ENCODE measurements at regions of chr11 and their contacts with region 1.

Region 1: DNA sequence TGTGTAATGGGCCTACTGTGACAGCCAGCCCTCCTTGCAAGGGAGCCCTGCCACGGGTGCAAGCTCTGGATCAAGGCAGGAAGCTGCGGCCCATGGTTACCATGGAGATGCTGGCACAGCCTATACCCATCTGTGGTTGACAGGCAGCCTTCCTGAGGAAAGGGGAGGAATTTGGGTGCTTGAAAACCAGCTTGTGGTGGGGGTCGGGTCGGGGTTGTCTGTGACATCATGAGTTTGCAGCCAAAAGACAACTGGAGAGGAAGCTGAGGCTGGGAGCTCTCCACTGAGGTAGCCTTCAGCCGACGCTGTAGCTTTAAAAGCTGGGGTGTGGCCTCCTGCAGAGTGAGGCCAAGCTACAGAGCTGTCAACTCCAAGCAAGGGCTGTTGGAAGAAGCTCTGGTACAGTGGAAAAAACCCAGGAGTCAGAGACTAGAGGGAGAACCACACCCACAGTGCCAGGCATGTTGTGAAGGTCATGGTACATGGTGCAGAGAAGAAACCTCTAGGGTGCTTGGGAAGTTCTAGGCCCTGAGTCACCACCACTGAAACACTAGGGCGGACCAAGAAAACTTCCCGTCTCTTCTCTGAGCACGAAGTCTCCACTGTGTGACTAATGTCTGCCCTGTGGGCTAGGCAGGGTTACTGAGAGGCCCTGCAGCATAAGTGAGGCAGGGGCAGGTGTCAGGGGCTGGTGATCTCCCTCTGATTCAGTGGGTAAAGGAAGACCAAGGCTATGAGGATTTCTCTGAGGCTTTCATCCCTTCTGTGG is 10.8 kb upstream of the LDHA start:
- DNase-seq: peak; percentile 90
- H3K4me3 Mint-ChIP-seq: peak overlapping the region; percentile 85
- H3K27ac Mint-ChIP-seq: peak overlapping the region; percentile 100
- H3K4me1 Mint-ChIP-seq: peaks cover 37% of the 10 kb centered on the region
- H3K27me3 Mint-ChIP-seq: no peaks in the 10 kb centered on the region

Region 2: GRCh38 chr11:18253231-18253630 is 130.3 kb before region 1 on chr11:
- intact Hi-C with region 1: no loop called
- DNase-seq: no peak
- H3K4me3 Mint-ChIP-seq: no peak overlapping the region
- H3K27ac Mint-ChIP-seq: no peak overlapping the region
- H3K4me1 Mint-ChIP-seq: peaks cover 8% of the 10 kb centered on the region
- H3K27me3 Mint-ChIP-seq: peaks cover 8% of the 10 kb centered on the region

Region 3: GRCh38 chr11:18395735-18396504 is 12.3 kb after region 1 on chr11:
- intact Hi-C with region 1: loop called (anchors 1 kb)
- DNase-seq: peak; percentile 99
- H3K4me3 Mint-ChIP-seq: peak overlapping the region; percentile 97
- H3K27ac Mint-ChIP-seq: peak overlapping the region; percentile 98
- H3K4me1 Mint-ChIP-seq: peaks cover 54% of the 10 kb centered on the region
- H3K27me3 Mint-ChIP-seq: no peaks in the 10 kb centered on the region